ENCODE measurements at regions of chr22 and their contacts with region 1.

Region 1: DNA sequence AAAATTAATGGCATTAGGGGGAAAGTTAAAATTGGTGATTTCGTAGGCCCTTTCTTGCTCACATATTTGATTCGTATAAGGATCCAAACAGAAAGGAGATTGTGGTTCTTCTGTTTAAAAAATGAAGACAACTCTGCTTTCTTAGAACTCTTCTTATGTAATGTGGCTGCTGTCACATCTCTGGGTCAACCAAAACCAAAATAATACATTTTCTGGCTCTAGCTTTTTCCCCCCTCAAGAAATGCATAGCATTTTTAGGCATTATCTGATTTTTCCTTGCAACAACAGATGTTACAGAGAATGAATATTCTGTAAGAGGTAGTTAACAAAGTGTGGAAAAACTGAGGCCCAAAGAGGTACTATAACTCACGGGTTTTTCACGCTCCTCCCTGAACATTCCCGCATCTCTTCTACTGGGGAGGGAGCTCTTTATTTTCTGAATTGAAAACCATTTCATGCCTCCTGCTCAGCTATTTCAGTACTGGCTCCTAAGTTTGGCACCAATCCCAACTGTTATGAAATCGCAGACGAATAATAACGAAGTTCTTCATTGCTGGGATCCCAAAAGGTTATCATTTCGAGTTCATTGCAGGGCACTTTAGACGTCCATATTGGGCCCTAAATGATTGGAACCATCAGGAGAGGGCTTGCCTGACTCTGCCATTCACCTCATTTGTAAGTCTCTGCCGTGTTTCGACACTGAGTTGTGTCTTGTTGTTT is 17.1 kb downstream of the GRAP2 start:
- DNase-seq: no peak
- ATAC-seq: no peak
- H3K4me3 Mint-ChIP-seq: peak overlapping the region; percentile 73
- H3K27ac Mint-ChIP-seq: peak overlapping the region; percentile 91
- H3K4me1 Mint-ChIP-seq: peaks cover 85% of the 10 kb centered on the region
- H3K27me3 Mint-ChIP-seq: no peaks in the 10 kb centered on the region

Region 2: GRCh38 chr22:39900306-39901227 is 17.4 kb before region 1 on chr22 and contains the start of gene GRAP2:
- CTCF ChIA-PET with region 1: interaction called, 242 read pairs
- POLR2A ChIA-PET with region 1: interaction called, 412 read pairs
- DNase-seq: peak; percentile 90
- ATAC-seq: peak; percentile 95
- H3K4me3 Mint-ChIP-seq: peak within 1 kb of the TSS; percentile 95
- H3K27ac Mint-ChIP-seq: peak within 1 kb of the TSS; percentile 96
- H3K4me1 Mint-ChIP-seq: peaks cover 17% of the 10 kb centered on the region
- H3K27me3 Mint-ChIP-seq: no peaks in the 10 kb centered on the region
- total RNA-seq, gene GRAP2: 235 to 239 TPM

Measured in activated CD8-positive, alpha-beta T cell treated with anti-CD3 and anti-CD28 coated beads, Interleukin-2, amount 10 ng/mL, durations not matched to agents 7 days and 5 days (primary cell).